ENCODE measurements at regions of chr5 and their contacts with region 1.

Region 1: DNA sequence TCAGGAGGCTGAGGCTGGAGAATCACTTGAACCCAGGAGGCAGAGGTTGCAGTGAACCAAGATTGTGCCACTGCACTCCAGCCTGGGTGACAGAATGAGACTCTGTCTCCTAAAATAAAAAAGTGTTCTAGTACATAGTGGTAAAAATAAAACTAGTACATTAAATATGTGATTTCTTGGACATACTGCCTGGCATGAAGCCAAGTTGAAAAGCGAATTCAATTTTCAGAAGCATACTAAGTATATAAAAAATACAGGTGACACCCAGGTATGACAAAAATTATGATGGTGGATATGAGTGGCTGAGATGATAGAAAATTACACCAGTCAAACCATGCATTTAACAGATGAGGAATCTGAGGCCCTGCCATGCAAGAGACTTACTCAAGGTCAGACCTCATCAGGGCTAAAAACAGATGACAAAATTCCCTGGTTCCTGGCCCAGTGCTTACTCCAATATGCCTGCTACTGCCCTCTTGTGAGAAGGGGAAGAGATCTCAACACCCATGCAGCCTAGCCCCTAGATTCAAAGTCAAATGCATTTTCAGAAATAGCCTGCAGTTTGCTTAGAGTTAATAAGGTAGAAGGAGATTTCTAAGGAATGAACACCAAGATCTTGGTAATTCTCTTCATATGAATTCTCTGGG is 46.6 kb upstream of the GNPDA1 start:
- DNase-seq: peak; percentile 53
- H3K4me3 ChIP-seq: no peak overlapping the region
- H3K27ac ChIP-seq: no peak overlapping the region
- H3K4me1 ChIP-seq: peaks cover 48% of the 10 kb centered on the region
- H3K27me3 ChIP-seq: no peaks in the 10 kb centered on the region
- CTCF ChIP-seq: peak; percentile 26; the same call in 1 of the 2 replicates

Region 2: GRCh38 chr5:142108432-142109330 is 49.3 kb after region 1 on chr5 and contains the start of gene NDFIP1:
- CTCF ChIA-PET with region 1: no interaction called
- POLR2A ChIA-PET with region 1: no interaction called
- intact Hi-C with region 1: loop called (anchors 2 kb)
- DNase-seq: peak; percentile 86
- H3K4me3 ChIP-seq: peak within 1 kb of the TSS; percentile 69
- H3K27ac ChIP-seq: peak within 1 kb of the TSS; percentile 86
- H3K4me1 ChIP-seq: peaks cover 12% of the 10 kb centered on the region
- H3K27me3 ChIP-seq: no peaks in the 10 kb centered on the region
- CTCF ChIP-seq: no peak
- total RNA-seq, gene NDFIP1: 47.6 and 49.3 TPM in 2 replicates

Region 3: DNA sequence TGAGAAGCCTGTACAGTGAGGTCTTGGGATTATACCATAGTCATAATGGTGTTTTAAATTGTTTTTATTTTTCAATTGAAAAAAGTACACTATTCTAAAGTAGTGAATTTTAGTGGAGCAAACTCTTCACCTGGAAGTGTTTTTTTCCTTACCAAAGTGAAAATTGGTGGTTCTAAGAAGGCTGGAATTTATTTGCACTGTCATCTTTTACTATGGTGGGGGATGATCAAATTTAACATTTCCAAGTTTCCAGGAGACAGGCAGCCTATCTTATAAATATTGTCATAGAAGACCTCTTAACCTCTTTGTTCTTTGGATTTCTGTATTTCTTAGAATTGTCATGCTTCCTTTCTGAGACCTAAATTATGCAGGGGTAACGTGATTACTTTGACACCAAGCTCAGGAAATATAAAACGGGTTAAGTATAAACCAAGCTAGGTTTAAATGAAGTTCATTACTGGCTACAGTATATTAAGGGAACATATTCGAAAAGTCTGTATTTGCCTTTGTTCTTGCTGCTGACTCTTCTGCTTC is 69.3 kb after region 1 on chr5:
- CTCF ChIA-PET with region 1: no interaction called
- POLR2A ChIA-PET with region 1: no interaction called
- intact Hi-C with region 1: loop called (anchors 5 kb)
- DNase-seq: peak; percentile 19
- H3K4me3 ChIP-seq: no peak overlapping the region
- H3K27ac ChIP-seq: peak overlapping the region; percentile 14
- H3K4me1 ChIP-seq: peaks cover 14% of the 10 kb centered on the region
- H3K27me3 ChIP-seq: no peaks in the 10 kb centered on the region
- CTCF ChIP-seq: no peak